ENCODE measurements at regions of chr16 and their contacts with region 1.

Region 1: GRCh38 chr16:48432136-48432535 is 46.9 kb upstream of the SIAH1 start:
- DNase-seq: no peak
- H3K4me3 ChIP-seq: no peak overlapping the region
- H3K27ac ChIP-seq: no peak overlapping the region
- H3K4me1 ChIP-seq: no peaks in the 10 kb centered on the region
- H3K27me3 ChIP-seq: no peaks in the 10 kb centered on the region
- CTCF ChIP-seq: no peak

Region 2: GRCh38 chr16:48081656-48082055 is 350.5 kb before region 1 on chr16:
- CTCF ChIA-PET with region 1: interaction called, 19 read pairs
- POLR2A ChIA-PET with region 1: no interaction called
- intact Hi-C with region 1: no loop called
- DNase-seq: peak; percentile 2 to 70
- H3K4me3 ChIP-seq: no peak overlapping the region
- H3K27ac ChIP-seq: no peak overlapping the region
- H3K4me1 ChIP-seq: peaks cover 16% of the 10 kb centered on the region; the same call in 1 of the 2 replicates
- H3K27me3 ChIP-seq: no peaks in the 10 kb centered on the region
- CTCF ChIP-seq: no peak

Region 3: GRCh38 chr16:50161950-50162349 is 1729.8 kb after region 1 on chr16:
- CTCF ChIA-PET with region 1: no interaction called
- POLR2A ChIA-PET with region 1: interaction called, 10 read pairs
- intact Hi-C with region 1: no loop called
- DNase-seq: no peak
- H3K4me3 ChIP-seq: no peak overlapping the region
- H3K27ac ChIP-seq: no peak overlapping the region
- H3K4me1 ChIP-seq: no peaks in the 10 kb centered on the region
- H3K27me3 ChIP-seq: no peaks in the 10 kb centered on the region
- CTCF ChIP-seq: no peak

Measured in PC-9 (cell line).